Activated CD4-positive, alpha-beta T cell treated with anti-CD3 and anti-CD28 coated beads for 36 hours (primary cell): ENCODE measurements at regions of chr1 and their contacts with region 1.

Region 1: GRCh38 chr1:230978491-230979388 is at the starts of genes ARV1 and TTC13:
- DNase-seq: peak; percentile 99
- ATAC-seq: peak; percentile 97
- H3K4me3 Mint-ChIP-seq: peak within 1 kb of the TSS; percentile 86
- H3K27ac Mint-ChIP-seq: peak within 1 kb of the TSS; percentile 98
- H3K4me1 Mint-ChIP-seq: peaks cover 32% of the 10 kb centered on the region
- H3K27me3 Mint-ChIP-seq: no peaks in the 10 kb centered on the region
- total RNA-seq, gene ARV1: 16.2 to 16.9 TPM
- total RNA-seq, gene TTC13: 13.6 to 16.2 TPM

Region 2: DNA sequence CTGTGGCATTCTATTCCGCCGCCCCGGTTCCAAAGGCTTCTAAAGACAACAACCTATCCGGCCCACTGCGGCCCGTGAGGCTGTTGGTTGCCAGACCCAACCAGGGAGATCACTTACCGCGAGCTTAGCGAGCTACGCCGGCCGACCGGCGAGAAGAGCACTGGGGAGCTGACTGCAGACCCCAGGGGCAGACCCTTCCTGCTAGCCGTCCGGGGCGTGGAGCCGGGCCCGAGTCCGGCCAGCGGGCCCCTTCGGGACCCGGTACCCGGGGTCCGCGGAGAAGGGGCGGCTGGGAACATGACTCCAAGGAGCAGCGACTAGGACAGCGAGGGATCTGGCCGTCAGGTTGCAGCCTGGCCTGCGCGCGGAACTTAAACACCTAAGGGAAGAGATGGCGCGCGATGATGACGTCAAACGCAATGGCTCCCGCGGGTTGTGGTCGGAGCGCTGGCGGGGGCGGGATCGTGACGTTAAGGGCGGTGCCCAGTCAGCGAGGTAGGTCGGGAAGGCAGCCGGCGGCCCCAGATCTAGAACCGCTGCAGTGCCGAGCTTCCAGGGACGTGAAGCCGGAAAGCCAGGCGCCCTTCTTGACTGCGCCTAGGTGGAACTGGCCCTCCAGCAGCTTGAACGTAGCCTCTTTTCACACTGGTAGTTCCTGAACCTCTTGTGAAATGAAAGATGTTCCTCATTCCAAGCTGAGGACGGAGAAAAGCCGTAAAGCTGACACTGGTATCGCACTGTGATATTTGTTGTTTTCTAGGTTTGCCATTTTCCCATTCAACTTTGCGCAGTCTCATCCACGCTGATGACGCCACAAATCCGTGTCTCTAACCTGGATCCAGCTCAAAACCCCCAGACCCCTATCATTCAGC is 1470.6 kb before region 1 on chr1 and contains the start of gene NUP133:
- CTCF ChIA-PET with region 1: no interaction called
- POLR2A ChIA-PET with region 1: no interaction called
- intact Hi-C with region 1: loop called in 1 of 2 experiments (anchors 5 kb)
- DNase-seq: peak; percentile 100
- ATAC-seq: peak; percentile 95
- H3K4me3 Mint-ChIP-seq: peak within 1 kb of the TSS; percentile 95
- H3K27ac Mint-ChIP-seq: peak within 1 kb of the TSS; percentile 92
- H3K4me1 Mint-ChIP-seq: peaks cover 24% of the 10 kb centered on the region
- H3K27me3 Mint-ChIP-seq: no peaks in the 10 kb centered on the region
- total RNA-seq, gene NUP133: 53.5 to 57.5 TPM

Region 3: GRCh38 chr1:230917284-230918135 is 61.2 kb before region 1 on chr1:
- CTCF ChIA-PET with region 1: interaction called, 6 read pairs
- POLR2A ChIA-PET with region 1: no interaction called
- intact Hi-C with region 1: loop called (anchors 1 kb)
- DNase-seq: peak; percentile 85
- ATAC-seq: peak; percentile 80
- H3K4me3 Mint-ChIP-seq: no peak overlapping the region
- H3K27ac Mint-ChIP-seq: no peak overlapping the region
- H3K4me1 Mint-ChIP-seq: peaks cover 7% of the 10 kb centered on the region
- H3K27me3 Mint-ChIP-seq: no peaks in the 10 kb centered on the region

Region 4: DNA sequence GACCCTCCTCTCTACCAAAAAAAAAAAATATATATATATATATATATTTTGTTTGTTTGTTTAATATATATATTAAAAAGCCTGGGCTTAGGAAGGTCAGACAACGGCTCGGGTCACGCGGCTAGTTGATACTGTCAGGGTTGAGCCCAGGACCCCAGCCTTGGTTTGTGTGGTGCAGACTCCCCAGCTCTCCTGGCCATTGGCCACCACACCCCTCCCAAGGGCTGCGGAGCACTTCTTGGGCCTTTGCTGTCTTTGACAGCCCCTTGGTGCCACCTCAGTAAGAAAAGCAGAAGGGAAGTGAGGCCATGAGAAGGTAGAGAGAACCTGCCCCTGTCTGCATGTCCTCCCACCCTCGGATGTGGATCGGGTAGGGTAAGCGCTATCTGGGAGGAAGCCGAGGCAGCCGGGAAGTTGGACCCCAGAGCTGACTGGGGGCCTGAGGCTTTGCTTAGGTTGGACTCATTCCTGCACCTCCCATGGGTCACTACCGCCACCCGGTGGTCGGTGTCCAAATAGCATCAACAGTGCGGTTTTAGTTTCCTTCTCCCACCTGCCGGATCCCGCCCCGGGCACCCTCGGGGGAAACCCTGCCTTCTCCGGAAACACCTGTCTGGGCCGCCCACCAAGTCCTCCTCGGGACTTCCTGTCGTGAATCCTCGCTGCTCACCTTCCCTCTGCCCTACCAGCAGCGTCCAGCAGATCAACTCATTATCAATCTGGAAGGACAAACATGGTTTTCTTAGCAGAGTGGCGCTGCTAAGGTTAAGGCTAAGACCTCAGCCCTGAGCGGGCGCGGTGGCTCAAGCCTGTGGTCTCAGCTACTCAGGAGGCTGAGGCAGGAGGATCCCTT is 232.5 kb after region 1 on chr1:
- CTCF ChIA-PET with region 1: no interaction called
- POLR2A ChIA-PET with region 1: no interaction called
- intact Hi-C with region 1: loop called in 1 of 2 experiments (anchors 1 kb)
- DNase-seq: peak; percentile 96
- ATAC-seq: peak; percentile 97
- H3K4me3 Mint-ChIP-seq: peak overlapping the region; percentile 61
- H3K27ac Mint-ChIP-seq: peak overlapping the region; percentile 79
- H3K4me1 Mint-ChIP-seq: peaks cover 8% of the 10 kb centered on the region
- H3K27me3 Mint-ChIP-seq: no peaks in the 10 kb centered on the region

Region 5: GRCh38 chr1:231337472-231338269 is 358.9 kb after region 1 on chr1 and contains the start of gene EXOC8:
- CTCF ChIA-PET with region 1: no interaction called
- POLR2A ChIA-PET with region 1: no interaction called
- intact Hi-C with region 1: loop called (anchors 1 to 2 kb)
- DNase-seq: peak; percentile 97
- ATAC-seq: peak; percentile 82
- H3K4me3 Mint-ChIP-seq: peak within 1 kb of the TSS; percentile 93
- H3K27ac Mint-ChIP-seq: peak within 1 kb of the TSS; percentile 98
- H3K4me1 Mint-ChIP-seq: peaks cover 44% of the 10 kb centered on the region
- H3K27me3 Mint-ChIP-seq: no peaks in the 10 kb centered on the region
- total RNA-seq, gene EXOC8: 10.0 to 13.7 TPM

Region 6: GRCh38 chr1:231528172-231529029 is 549.7 kb after region 1 on chr1 and contains the start of gene TSNAX:
- CTCF ChIA-PET with region 1: no interaction called
- POLR2A ChIA-PET with region 1: no interaction called
- intact Hi-C with region 1: loop called in 1 of 2 experiments (anchors 1 kb)
- DNase-seq: peak; percentile 94
- ATAC-seq: peak; percentile 93
- H3K4me3 Mint-ChIP-seq: peak within 1 kb of the TSS; percentile 88
- H3K27ac Mint-ChIP-seq: peak within 1 kb of the TSS; percentile 99
- H3K4me1 Mint-ChIP-seq: peaks cover 45% of the 10 kb centered on the region
- H3K27me3 Mint-ChIP-seq: no peaks in the 10 kb centered on the region
- total RNA-seq, gene TSNAX: 36.5 to 46.7 TPM